Breast epithelium (tissue), 4 donors: ENCODE measurements at regions of chr17 and their contacts with region 1.

Region 1: DNA sequence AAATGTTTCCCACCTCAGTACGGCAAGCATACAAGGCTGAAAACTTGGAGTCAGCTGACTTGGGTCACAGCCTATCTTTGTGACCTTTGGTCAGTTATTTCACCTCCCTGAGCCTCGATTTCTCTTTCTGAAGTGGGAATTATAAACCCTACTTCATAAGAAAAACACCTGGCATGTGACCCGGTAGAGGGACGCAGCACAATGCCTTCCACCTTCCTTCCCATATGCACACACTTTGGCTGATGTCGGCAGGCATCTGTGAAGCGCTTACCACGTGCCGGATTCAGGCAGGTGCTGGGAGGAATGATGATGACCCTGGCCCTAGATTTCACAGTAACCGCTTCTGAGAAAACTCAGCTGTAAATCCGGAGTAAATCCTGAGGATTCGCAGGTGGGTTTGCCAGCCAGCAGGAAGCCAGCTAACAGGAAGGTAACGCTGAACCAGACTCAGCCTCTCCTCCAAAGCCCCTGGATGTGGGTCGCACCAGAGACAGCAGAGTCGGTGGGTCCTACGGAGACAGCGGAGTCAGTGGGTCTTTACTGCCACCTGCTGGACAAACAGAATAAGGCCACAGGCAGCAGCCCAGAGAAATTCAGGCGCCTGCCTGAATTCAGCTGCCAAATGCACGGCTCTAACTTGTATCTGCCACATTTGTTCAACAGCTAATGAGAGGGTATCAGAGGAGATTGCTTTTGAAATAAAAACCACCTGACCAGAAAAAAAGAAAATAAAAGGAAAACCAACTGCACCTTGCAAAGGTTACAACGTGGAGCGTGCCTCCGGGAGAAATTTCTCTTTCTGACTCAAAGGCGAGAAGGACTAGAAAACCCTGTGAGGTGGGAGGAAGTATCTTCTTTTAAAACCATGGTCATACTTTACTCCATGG is 16.6 kb downstream of the COPRS start:
- DNase-seq: peak; percentile 60 to 65
- H3K4me3 ChIP-seq: peak overlapping the region in 2 of 3 donors; percentile 14 to 41
- H3K27ac ChIP-seq: peak overlapping the region; percentile 16 to 40
- H3K4me1 ChIP-seq: no peaks in the 10 kb centered on the region
- H3K27me3 ChIP-seq: no peaks in the 10 kb centered on the region
- CTCF ChIP-seq: peak; percentile 90 to 99 (median 98)
- POLR2A ChIP-seq: no peak

Region 2: DNA sequence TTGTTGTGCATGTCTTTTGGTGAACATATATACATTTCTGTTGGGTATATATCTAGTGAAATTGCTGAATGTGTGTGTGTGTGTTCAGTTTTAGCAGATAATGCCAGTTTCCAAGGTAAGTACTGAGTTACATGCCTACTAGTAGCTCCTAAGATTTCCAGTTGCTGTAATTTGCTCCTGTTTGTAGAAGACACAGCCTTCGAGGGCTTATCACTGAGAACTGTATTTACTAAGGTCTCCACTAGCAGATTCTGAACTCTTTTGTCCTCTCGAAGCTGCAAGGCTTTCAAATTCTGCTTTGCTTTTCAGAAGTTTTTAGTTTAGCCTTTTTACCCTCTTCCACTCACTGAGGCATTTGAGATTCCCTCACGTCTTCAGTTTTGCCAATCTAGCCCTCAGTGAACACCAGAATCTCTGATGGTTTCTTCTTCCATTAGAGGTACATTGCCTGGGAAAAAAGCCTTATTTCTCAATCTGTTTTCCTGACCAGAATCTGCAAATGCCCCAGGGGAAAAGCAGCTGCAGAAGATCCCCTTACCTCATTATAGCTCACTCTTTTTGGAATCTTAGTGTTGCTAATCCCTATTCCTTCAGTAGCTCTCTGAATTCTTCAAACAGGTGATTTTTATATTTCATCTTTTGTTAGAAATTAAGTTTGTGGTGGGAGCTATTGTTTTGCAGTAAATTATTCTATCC is 694.8 kb before region 1 on chr17:
- intact Hi-C with region 1: loop called (anchors 5 kb)
- DNase-seq: no peak
- H3K4me3 ChIP-seq: no peak overlapping the region
- H3K27ac ChIP-seq: no peak overlapping the region
- H3K4me1 ChIP-seq: no peaks in the 10 kb centered on the region
- H3K27me3 ChIP-seq: no peaks in the 10 kb centered on the region
- CTCF ChIP-seq: no peak
- POLR2A ChIP-seq: no peak

Region 3: GRCh38 chr17:31433091-31433790 is 409.2 kb before region 1 on chr17:
- intact Hi-C with region 1: loop called (anchors 10 kb)
- DNase-seq: no peak
- H3K4me3 ChIP-seq: no peak overlapping the region
- H3K27ac ChIP-seq: no peak overlapping the region
- H3K4me1 ChIP-seq: no peaks in the 10 kb centered on the region
- H3K27me3 ChIP-seq: peaks cover 0 to 11% of the 10 kb centered on the region in 2 donors
- CTCF ChIP-seq: no peak
- POLR2A ChIP-seq: no peak

Region 4: GRCh38 chr17:31558748-31559644 is 283.4 kb before region 1 on chr17:
- intact Hi-C with region 1: loop called (anchors 5 kb)
- DNase-seq: peak; percentile 76 to 85
- H3K4me3 ChIP-seq: peak overlapping the region; percentile 62 to 91 (median 62)
- H3K27ac ChIP-seq: peak overlapping the region; percentile 91 to 97
- H3K4me1 ChIP-seq: peaks cover 0 to under 1% of the 10 kb centered on the region in 2 donors
- H3K27me3 ChIP-seq: no peaks in the 10 kb centered on the region
- CTCF ChIP-seq: peak in 2 of 3 donors; percentile 25 to 92
- POLR2A ChIP-seq: no peak

Region 5: GRCh38 chr17:33732116-33732515 is 1889.7 kb after region 1 on chr17:
- intact Hi-C with region 1: no loop called
- DNase-seq: no peak
- H3K4me3 ChIP-seq: no peak overlapping the region
- H3K27ac ChIP-seq: no peak overlapping the region
- H3K4me1 ChIP-seq: no peaks in the 10 kb centered on the region
- H3K27me3 ChIP-seq: peaks cover 0 to 32% of the 10 kb centered on the region in 2 donors
- CTCF ChIP-seq: no peak
- POLR2A ChIP-seq: no peak